ENCODE measurements at regions of chr12 and their contacts with region 1.

Region 1: DNA sequence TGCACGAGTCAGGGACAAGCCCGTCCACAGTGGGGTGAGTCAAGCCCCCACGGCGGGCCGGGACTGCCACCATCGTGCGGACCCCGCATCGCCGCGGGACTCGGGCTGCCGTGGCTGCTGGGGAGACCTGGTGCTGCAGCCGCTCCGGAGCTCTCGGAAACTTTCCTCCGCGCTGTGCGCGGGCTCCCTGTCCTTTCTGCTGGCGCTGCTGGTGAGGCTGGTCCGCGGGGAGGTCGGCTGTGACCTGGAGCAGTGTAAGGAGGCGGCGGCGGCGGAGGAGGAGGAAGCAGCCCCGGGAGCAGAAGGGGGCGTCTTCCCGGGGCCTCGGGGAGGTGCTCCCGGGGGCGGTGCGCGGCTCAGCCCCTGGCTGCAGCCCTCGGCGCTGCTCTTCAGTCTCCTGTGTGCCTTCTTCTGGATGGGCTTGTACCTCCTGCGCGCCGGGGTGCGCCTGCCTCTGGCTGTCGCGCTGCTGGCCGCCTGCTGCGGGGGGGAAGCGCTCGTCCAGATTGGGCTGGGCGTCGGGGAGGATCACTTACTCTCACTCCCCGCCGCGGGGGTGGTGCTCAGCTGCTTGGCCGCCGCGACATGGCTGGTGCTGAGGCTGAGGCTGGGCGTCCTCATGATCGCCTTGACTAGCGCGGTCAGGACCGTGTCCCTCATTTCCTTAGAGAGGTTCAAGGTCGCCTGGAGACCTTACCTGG is 1.1 kb downstream of the PDE3A start:
- DNase-seq: peak; percentile 91
- ATAC-seq: peak; percentile 77

Region 2: DNA sequence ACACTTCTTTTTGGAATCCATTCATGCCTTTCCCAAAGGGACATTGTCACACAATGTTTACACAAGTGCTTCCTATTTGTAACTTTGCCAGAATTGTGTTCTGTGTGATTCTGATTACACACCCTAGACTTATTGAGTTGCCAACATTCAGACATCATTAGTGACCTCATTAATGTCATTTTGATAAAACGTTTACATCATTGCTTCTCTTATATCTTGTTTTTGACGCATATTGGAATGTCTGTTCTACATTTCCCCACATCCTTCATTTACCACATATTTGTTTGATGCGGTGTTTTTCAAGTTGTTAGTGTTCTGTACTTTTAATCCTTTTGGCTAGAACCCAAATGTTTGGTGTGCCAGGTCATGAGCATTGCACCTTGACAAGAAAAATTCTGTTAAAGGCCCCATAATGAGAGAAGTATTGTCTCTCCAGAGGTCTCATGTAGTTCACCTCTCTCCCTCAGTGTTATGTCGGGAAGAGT is 624.7 kb before region 1 on chr12:
- intact Hi-C with region 1: loop called (anchors 10 kb)
- DNase-seq: no peak
- ATAC-seq: peak; percentile 75

Region 3: GRCh38 chr12:20212658-20213555 is 156.5 kb before region 1 on chr12:
- intact Hi-C with region 1: loop called (anchors 10 kb)
- DNase-seq: peak; percentile 87
- ATAC-seq: peak; percentile 97

Region 4: GRCh38 chr12:20272801-20273200 is 96.7 kb before region 1 on chr12:
- intact Hi-C with region 1: loop called (anchors 2 kb)
- DNase-seq: no peak
- ATAC-seq: peak; percentile 76

Region 5: GRCh38 chr12:20527417-20528163 is 158.1 kb after region 1 on chr12:
- intact Hi-C with region 1: no loop called
- DNase-seq: no peak
- ATAC-seq: peak; percentile 23

Measured in Right ventricle myocardium superior (tissue), 1 donor.